Right cardiac atrium (tissue), 5 donors: ENCODE measurements at regions of chr19 and their contacts with region 1.

Region 1: GRCh38 chr19:53132141-53132991 is at the start of gene ZNF415:
- DNase-seq: peak; percentile 92 to 94 (median 93)
- ATAC-seq: peak; percentile 93 to 97
- H3K4me3 ChIP-seq: peak within 1 kb of the TSS; percentile 77
- H3K27ac ChIP-seq: peak within 1 kb of the TSS; percentile 86
- H3K4me1 ChIP-seq: peaks cover 2% of the 10 kb centered on the region
- H3K27me3 ChIP-seq: no peaks in the 10 kb centered on the region
- total RNA-seq, gene ZNF415: 20.7 to 26.8 (median 22.1) TPM

Region 2: DNA sequence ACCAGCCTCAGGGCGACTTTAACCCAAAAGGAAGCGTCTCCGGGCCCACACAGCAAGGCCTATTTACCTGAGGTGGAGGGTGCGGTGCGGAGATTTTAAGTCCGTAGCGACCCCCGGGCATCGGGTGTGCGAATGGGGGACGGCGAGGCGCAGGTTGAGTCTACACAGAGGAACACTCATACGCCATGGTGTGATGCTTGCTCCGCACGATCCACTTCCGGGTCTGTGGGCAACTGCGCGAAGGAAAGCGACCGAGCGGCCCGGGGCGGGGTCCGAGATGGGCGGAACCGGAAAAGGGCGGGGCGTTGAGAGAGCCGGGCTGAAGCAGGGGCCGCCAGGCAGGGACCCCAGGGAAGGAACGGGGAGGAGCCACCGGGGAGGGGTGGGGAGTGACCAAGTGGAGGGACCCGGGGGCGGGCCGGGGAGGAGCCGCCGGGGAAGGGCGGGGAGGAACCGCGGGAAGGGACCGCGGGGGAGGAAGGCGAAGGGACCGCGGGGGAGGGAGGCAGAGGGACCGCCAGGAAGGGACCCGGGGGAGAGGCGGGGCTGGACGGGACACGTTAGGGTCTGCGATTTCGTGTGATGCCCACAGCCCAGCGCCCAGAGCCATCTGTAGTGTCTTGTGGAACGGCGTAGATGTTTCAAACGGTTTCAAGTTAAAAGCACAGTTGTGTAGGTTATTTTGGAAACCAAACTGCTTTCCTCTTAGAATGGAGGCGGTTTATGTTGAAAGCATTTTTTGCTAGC is 29.0 kb before region 1 on chr19 and contains the start of gene ZNF160:
- intact Hi-C with region 1: loop called in 1 of 4 experiments (anchors 2 kb)
- DNase-seq: peak; percentile 99 to 100 (median 99)
- ATAC-seq: peak; percentile 99 to 100
- H3K4me3 ChIP-seq: peak within 1 kb of the TSS; percentile 78
- H3K27ac ChIP-seq: peak within 1 kb of the TSS; percentile 78
- H3K4me1 ChIP-seq: peaks cover 4% of the 10 kb centered on the region
- H3K27me3 ChIP-seq: no peaks in the 10 kb centered on the region
- total RNA-seq, gene ZNF160: 15.9 to 23.1 (median 18.1) TPM